Mammary epithelial cell (primary cell): ENCODE measurements at regions of chr13 and their contacts with region 1.

Region 1: DNA sequence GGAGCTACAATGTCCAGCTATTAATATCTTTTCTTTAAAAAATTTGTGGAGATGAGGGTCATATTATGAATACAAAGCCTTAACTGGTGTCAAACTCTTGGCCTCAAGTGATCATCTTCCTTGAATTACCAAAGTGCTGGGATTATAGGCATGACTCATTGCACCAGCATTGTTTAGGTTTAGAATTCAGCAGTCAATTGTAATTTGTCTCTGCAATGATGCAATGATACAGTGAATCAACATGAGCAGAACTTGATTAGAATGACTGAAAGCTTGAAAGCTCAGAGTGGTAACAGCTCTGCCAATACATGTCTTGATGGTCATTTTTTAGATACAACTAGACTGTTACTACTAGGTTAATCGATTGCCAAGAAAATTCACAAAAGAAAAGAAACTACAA is 752.8 kb upstream of the MIR17HG start:
- DNase-seq: peak; percentile 86
- H3K4me3 ChIP-seq: no peak overlapping the region
- H3K27ac ChIP-seq: no peak overlapping the region
- H3K4me1 ChIP-seq: peaks cover 7% of the 10 kb centered on the region
- H3K27me3 ChIP-seq: no peaks in the 10 kb centered on the region
- CTCF ChIP-seq: no peak

Region 2: GRCh38 chr13:90272356-90272755 is 322.3 kb before region 1 on chr13:
- CTCF ChIA-PET with region 1: no interaction called
- dilution Hi-C with region 1: no loop called
- in situ Hi-C with region 1: no loop called
- intact Hi-C with region 1: no loop called
- DNase-seq: peak; percentile 85
- H3K4me3 ChIP-seq: no peak overlapping the region
- H3K27ac ChIP-seq: no peak overlapping the region
- H3K4me1 ChIP-seq: no peaks in the 10 kb centered on the region
- H3K27me3 ChIP-seq: no peaks in the 10 kb centered on the region
- CTCF ChIP-seq: no peak

Region 3: DNA sequence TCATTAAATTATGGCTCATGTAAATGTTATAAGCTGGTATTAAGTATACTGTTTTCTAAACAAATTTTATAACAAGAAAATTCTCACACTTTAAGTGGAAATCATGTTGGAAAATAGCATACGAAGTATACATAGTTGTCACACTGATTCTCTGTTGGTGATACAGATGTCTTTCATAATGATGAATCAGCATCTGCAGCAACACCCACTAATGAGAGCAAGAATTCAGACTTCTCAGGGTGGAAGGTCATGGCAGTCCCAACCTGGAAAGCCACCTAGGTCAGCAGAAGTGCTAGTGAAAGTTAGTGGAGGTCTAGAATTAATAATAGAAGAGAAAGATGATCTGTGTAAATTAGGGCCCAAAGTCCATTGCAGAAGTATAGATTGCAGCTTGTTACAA is 33.1 kb after region 1 on chr13:
- CTCF ChIA-PET with region 1: no interaction called
- dilution Hi-C with region 1: loop called (anchors 5 kb)
- in situ Hi-C with region 1: no loop called
- intact Hi-C with region 1: no loop called
- DNase-seq: no peak
- H3K4me3 ChIP-seq: no peak overlapping the region
- H3K27ac ChIP-seq: no peak overlapping the region
- H3K4me1 ChIP-seq: peaks cover 11% of the 10 kb centered on the region
- H3K27me3 ChIP-seq: no peaks in the 10 kb centered on the region
- CTCF ChIP-seq: no peak

Region 4: GRCh38 chr13:90717451-90717936 is 122.8 kb after region 1 on chr13:
- CTCF ChIA-PET with region 1: no interaction called
- dilution Hi-C with region 1: no loop called
- in situ Hi-C with region 1: no loop called
- intact Hi-C with region 1: loop called (anchors 1 kb)
- DNase-seq: peak; percentile 76
- H3K4me3 ChIP-seq: no peak overlapping the region
- H3K27ac ChIP-seq: no peak overlapping the region
- H3K4me1 ChIP-seq: peaks cover 15% of the 10 kb centered on the region
- H3K27me3 ChIP-seq: no peaks in the 10 kb centered on the region
- CTCF ChIP-seq: no peak